Mammary epithelial cell (primary cell): ENCODE measurements at regions of chr21 and their contacts with region 1.

Region 1: GRCh38 chr21:36902796-36903195 is 63.7 kb downstream of the HLCS start:
- DNase-seq: peak; percentile 12
- H3K4me3 ChIP-seq: no peak overlapping the region
- H3K27ac ChIP-seq: no peak overlapping the region
- H3K4me1 ChIP-seq: no peaks in the 10 kb centered on the region
- H3K27me3 ChIP-seq: no peaks in the 10 kb centered on the region
- CTCF ChIP-seq: no peak

Region 2: GRCh38 chr21:36759348-36760083 is 143.3 kb before region 1 on chr21:
- CTCF ChIA-PET with region 1: no interaction called
- dilution Hi-C with region 1: loop called (anchors 5 kb)
- in situ Hi-C with region 1: no loop called
- intact Hi-C with region 1: no loop called
- DNase-seq: no peak
- H3K4me3 ChIP-seq: no peak overlapping the region
- H3K27ac ChIP-seq: no peak overlapping the region
- H3K4me1 ChIP-seq: no peaks in the 10 kb centered on the region
- H3K27me3 ChIP-seq: no peaks in the 10 kb centered on the region
- CTCF ChIP-seq: no peak

Region 3: GRCh38 chr21:36847171-36847570 is 55.6 kb before region 1 on chr21:
- CTCF ChIA-PET with region 1: no interaction called
- dilution Hi-C with region 1: no loop called
- in situ Hi-C with region 1: no loop called
- intact Hi-C with region 1: no loop called
- DNase-seq: peak; percentile 75
- H3K4me3 ChIP-seq: peak overlapping the region in 1 of 3 experiments; percentile 17
- H3K27ac ChIP-seq: peak overlapping the region; percentile 85
- H3K4me1 ChIP-seq: peaks cover 10% of the 10 kb centered on the region
- H3K27me3 ChIP-seq: no peaks in the 10 kb centered on the region
- CTCF ChIP-seq: no peak